Heart right ventricle (tissue), 16 donors: ENCODE measurements at regions of chr2 and their contacts with region 1.

Region 1: GRCh38 chr2:45935791-45936622 is 284.5 kb downstream of the PRKCE start:
- DNase-seq: peak; percentile 89 to 90
- ATAC-seq: peak; percentile 84 to 96 (median 88)
- H3K4me3 ChIP-seq: peak overlapping the region in 1 of 10 donors; percentile 15
- H3K27ac ChIP-seq: peak overlapping the region in 7 of 10 donors; percentile 2 to 48 (median 42)
- H3K4me1 ChIP-seq: peaks cover 0 to 34% (median 22%) of the 10 kb centered on the region in 9 donors
- H3K27me3 ChIP-seq: no peaks in the 10 kb centered on the region
- CTCF ChIP-seq: peak; percentile 60 to 89 (median 80)

Region 2: DNA sequence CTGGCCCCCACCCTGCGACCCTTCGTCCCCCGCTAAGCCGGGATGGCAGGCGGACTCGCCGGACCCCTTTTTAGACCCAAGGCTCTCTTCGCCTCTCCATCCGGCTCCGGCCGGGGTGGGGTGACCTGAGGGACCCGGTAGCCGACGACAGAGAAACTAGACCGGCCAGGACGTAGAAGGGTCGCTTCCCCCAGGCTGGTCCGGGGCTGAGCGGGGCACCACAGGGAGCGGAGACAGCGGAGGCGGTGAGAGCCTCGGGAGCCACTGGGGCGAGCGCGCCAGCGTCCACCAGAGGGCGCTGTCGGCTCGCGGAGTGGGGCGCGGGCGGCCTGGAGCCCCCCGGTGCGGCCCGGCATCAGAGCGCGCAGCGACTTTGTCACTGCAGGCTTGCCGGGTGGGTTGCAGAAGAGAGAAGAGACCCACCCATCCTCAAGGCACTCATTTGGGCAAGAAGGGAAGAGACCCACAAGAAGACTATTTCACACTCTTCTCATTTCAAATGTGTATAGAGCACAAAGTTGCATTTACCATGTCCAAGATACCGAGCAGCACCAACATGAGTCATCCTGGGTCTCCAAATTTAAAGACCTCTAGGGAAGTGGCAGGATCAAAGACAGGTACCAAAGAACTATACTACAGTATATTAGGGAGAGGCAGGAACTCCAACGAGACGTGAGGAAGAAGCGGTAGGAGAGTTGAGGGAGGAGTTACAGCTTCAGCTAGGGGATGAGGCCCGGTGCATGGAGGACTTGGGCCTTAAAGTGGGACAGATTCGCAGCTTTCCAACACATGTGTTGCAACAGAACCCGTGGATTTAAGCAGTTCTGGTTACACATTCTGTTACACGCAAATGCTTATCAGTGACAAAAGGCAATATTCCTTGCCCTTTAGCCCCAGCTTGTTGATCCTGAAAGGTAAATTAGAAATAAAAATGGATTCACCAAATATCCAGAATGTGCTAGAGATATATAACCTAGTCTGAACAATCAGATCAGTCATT is 292.2 kb before region 1 on chr2:
- intact Hi-C with region 1: loop called (anchors 1 to 5 kb)
- DNase-seq: peak; percentile 62 to 79
- ATAC-seq: peak; percentile 95 to 97 (median 96)
- H3K4me3 ChIP-seq: peak overlapping the region; percentile 42 to 69 (median 62)
- H3K27ac ChIP-seq: peak overlapping the region in 2 of 10 donors; percentile 33 to 64
- H3K4me1 ChIP-seq: peaks cover 2 to 22% (median 12%) of the 10 kb centered on the region in 9 donors
- H3K27me3 ChIP-seq: peaks cover 0 to 17% (median 6%) of the 10 kb centered on the region in 7 donors
- CTCF ChIP-seq: peak; percentile 96 to 100 (median 99)

Region 3: GRCh38 chr2:45778720-45779171 is 157.3 kb before region 1 on chr2:
- intact Hi-C with region 1: loop called (anchors 2 to 10 kb)
- DNase-seq: peak in 1 of 2 donors; percentile 70
- ATAC-seq: peak; percentile 30 to 72 (median 63)
- H3K4me3 ChIP-seq: no peak overlapping the region
- H3K27ac ChIP-seq: no peak overlapping the region
- H3K4me1 ChIP-seq: peaks cover 0 to 71% (median 19%) of the 10 kb centered on the region in 9 donors
- H3K27me3 ChIP-seq: no peaks in the 10 kb centered on the region
- CTCF ChIP-seq: peak; percentile 73 to 87 (median 83)

Region 4: GRCh38 chr2:45813003-45813941 is 122.7 kb before region 1 on chr2:
- intact Hi-C with region 1: loop called in 1 of 10 experiments (anchors 10 kb)
- DNase-seq: peak; percentile 34 to 52
- ATAC-seq: peak; percentile 27 to 75 (median 68)
- H3K4me3 ChIP-seq: no peak overlapping the region
- H3K27ac ChIP-seq: peak overlapping the region in 8 of 10 donors; percentile 9 to 87 (median 56)
- H3K4me1 ChIP-seq: peaks cover 16 to 64% (median 47%) of the 10 kb centered on the region in 9 donors
- H3K27me3 ChIP-seq: no peaks in the 10 kb centered on the region
- CTCF ChIP-seq: no peak

Region 5: DNA sequence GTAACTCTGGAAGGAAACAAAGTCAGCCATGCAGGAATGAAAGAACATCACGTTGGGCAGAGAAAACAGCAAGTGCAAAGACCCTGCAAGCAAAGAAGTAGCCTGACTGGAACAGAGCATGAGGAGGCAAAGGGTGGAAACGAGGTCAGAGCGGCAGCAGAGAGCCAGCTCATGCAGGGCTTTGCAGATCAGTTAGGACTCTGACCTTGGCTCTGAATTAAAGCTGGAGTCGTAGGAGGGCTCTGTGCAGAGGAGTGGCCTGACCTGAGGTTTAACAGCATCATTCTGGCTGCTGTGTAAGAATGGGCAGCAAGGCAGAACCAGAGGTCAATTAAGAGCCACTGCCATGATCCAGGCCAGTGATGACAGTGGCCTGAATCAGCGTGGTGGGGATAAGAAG is 63.8 kb before region 1 on chr2:
- intact Hi-C with region 1: no loop called
- DNase-seq: no peak
- ATAC-seq: no peak
- H3K4me3 ChIP-seq: no peak overlapping the region
- H3K27ac ChIP-seq: no peak overlapping the region
- H3K4me1 ChIP-seq: peaks cover 0 to 34% (median 16%) of the 10 kb centered on the region in 9 donors
- H3K27me3 ChIP-seq: no peaks in the 10 kb centered on the region
- CTCF ChIP-seq: no peak

Region 6: GRCh38 chr2:46097714-46098480 is 161.9 kb after region 1 on chr2:
- intact Hi-C with region 1: no loop called
- DNase-seq: peak in 1 of 2 donors; percentile 89
- ATAC-seq: peak; percentile 82 to 97 (median 93)
- H3K4me3 ChIP-seq: no peak overlapping the region
- H3K27ac ChIP-seq: peak overlapping the region; percentile 11 to 92 (median 80)
- H3K4me1 ChIP-seq: peaks cover 0 to 39% (median 22%) of the 10 kb centered on the region in 9 donors
- H3K27me3 ChIP-seq: no peaks in the 10 kb centered on the region
- CTCF ChIP-seq: no peak